Activated CD4-positive, alpha-beta T cell treated with anti-CD3 and anti-CD28 coated beads for 36 hours (primary cell): ENCODE measurements at regions of chr1 and their contacts with region 1.

Region 1: GRCh38 chr1:192936313-192937018 is 122.7 kb downstream of the UCHL5 start:
- DNase-seq: no peak
- ATAC-seq: peak; percentile 85
- H3K4me3 Mint-ChIP-seq: no peak overlapping the region
- H3K27ac Mint-ChIP-seq: peak overlapping the region; percentile 12
- H3K4me1 Mint-ChIP-seq: peaks cover 18% of the 10 kb centered on the region
- H3K27me3 Mint-ChIP-seq: no peaks in the 10 kb centered on the region

Region 2: GRCh38 chr1:192860478-192861185 is 75.8 kb before region 1 on chr1:
- CTCF ChIA-PET with region 1: no interaction called
- POLR2A ChIA-PET with region 1: no interaction called
- intact Hi-C with region 1: no loop called
- DNase-seq: no peak
- ATAC-seq: no peak
- H3K4me3 Mint-ChIP-seq: no peak overlapping the region
- H3K27ac Mint-ChIP-seq: no peak overlapping the region
- H3K4me1 Mint-ChIP-seq: no peaks in the 10 kb centered on the region
- H3K27me3 Mint-ChIP-seq: no peaks in the 10 kb centered on the region

Region 3: GRCh38 chr1:192983349-192983980 is 47.0 kb after region 1 on chr1:
- CTCF ChIA-PET with region 1: no interaction called
- POLR2A ChIA-PET with region 1: no interaction called
- intact Hi-C with region 1: loop called (anchors 1 to 2 kb)
- DNase-seq: peak; percentile 67
- ATAC-seq: peak; percentile 84
- H3K4me3 Mint-ChIP-seq: no peak overlapping the region
- H3K27ac Mint-ChIP-seq: peak overlapping the region; percentile 76
- H3K4me1 Mint-ChIP-seq: peaks cover 39% of the 10 kb centered on the region
- H3K27me3 Mint-ChIP-seq: no peaks in the 10 kb centered on the region